ENCODE measurements at regions of chr17 and their contacts with region 1.

Region 1: GRCh38 chr17:10844621-10845387 is 6.9 kb upstream of the PIRT start:
- DNase-seq: peak; percentile 61 to 89 (median 81)
- ATAC-seq: peak; percentile 99
- H3K4me3 ChIP-seq: peak overlapping the region; percentile 36 to 37
- H3K27ac ChIP-seq: no peak overlapping the region
- H3K4me1 ChIP-seq: peaks cover 0 to 6% of the 10 kb centered on the region in 2 donors
- H3K27me3 ChIP-seq: no peaks in the 10 kb centered on the region
- CTCF ChIP-seq: peak; percentile 88 to 94

Region 2: GRCh38 chr17:10683853-10684252 is 161.0 kb before region 1 on chr17:
- intact Hi-C with region 1: no loop called
- DNase-seq: no peak
- ATAC-seq: no peak
- H3K4me3 ChIP-seq: no peak overlapping the region
- H3K27ac ChIP-seq: no peak overlapping the region
- H3K4me1 ChIP-seq: no peaks in the 10 kb centered on the region
- H3K27me3 ChIP-seq: no peaks in the 10 kb centered on the region
- CTCF ChIP-seq: peak; percentile 15 to 27

Region 3: GRCh38 chr17:10737168-10737622 is 107.6 kb before region 1 on chr17:
- intact Hi-C with region 1: loop called in 1 of 2 experiments (anchors 5 kb)
- DNase-seq: peak in 3 of 4 donors; percentile 60 to 82 (median 78)
- ATAC-seq: peak; percentile 97
- H3K4me3 ChIP-seq: no peak overlapping the region
- H3K27ac ChIP-seq: no peak overlapping the region
- H3K4me1 ChIP-seq: no peaks in the 10 kb centered on the region
- H3K27me3 ChIP-seq: no peaks in the 10 kb centered on the region
- CTCF ChIP-seq: peak; percentile 61 to 70

Measured in left lung (tissue), 14 donors.